HEK293 (cell line): ENCODE measurements at regions of chr10 and their contacts with region 1.

Region 1: DNA sequence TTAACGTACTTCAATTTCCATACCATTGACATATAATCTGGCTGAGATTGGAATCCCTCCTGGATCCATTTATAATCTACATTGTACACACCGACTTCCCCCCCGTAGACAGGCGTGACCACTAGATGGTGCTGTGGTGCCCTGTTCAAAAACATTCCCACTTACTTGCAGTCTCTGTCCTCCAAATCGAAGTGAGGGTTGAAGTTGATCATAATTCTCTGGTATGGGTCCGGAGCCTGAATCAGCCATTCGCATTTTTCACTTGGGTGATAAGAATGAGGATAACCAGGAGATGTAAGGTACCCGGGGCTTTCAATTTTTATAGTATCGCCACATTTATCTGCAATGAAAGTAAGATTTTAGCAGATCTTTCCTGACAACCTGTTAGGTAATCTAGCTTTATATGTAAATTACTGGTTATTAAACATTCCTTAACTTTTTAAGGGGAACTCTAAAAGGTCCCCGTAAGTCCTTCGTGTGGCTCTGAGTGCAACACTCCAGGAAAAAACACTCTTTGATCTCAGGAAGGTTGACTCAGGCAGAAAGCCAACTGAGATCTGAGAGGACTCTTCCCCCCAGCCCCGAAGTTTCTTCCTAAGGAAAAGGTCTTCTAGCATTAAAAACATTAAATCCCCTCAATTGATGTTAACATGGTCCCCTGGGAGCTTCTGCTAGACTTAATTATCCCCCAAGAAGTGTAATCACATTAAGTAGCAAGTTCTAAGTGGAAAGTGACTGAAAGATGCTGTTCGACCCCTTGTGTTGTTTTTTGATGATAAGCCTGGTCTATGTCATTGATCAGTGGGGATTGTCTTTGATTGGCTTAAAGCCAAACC is 3.7 kb downstream of the NRP1 start:
- H3K4me3 ChIP-seq: no peak overlapping the region
- H3K27ac ChIP-seq: peak overlapping the region; percentile 90
- H3K4me1 ChIP-seq: peaks cover 19% of the 10 kb centered on the region
- CTCF ChIP-seq: peak; percentile 61; the same call in 1 of the 2 replicates

Region 2: DNA sequence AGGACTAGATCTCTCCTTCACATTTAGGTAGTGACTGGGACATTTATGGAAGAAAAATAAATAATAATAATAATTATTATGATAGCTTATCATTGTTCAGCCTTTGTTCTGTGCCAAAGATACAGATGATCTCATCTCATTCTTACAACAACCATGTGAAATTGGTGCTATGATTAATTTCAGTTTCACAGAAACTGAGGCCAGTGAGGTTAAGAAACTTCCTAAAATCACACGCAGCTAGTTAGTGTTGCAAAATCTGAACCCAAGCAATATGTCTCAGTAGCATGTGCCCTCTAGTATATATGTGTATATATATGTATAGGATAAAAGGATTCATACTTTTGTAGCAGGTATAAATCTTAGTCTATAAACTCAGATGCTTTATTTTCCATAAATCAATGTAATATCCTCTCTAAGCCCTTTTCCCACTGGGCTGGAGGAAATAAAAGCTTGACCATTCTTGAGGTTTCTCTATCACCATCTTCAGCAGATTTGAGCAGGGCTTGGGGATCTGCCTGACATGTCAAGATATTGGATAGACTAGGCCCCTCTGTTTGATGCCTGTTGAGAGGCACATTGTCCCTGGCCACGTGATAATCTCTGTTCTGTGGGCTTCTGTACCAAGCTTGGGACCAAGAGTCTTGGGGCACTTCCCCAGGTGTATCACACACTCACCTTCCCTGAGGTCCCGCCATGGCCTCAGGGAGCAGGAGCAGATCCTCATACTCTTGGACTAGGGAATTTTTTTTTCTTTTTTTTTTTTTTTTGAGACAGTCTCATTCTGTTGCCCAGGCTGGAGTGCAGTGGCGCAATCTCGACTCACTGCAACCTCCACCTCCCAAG is 176.3 kb after region 1 on chr10:
- CTCF ChIA-PET with region 1: no interaction called
- POLR2A ChIA-PET with region 1: interaction called, 11 read pairs
- H3K4me3 ChIP-seq: no peak overlapping the region
- H3K27ac ChIP-seq: no peak overlapping the region
- H3K4me1 ChIP-seq: peaks cover 15% of the 10 kb centered on the region; the same call in 1 of the 2 replicates
- CTCF ChIP-seq: no peak

Region 3: DNA sequence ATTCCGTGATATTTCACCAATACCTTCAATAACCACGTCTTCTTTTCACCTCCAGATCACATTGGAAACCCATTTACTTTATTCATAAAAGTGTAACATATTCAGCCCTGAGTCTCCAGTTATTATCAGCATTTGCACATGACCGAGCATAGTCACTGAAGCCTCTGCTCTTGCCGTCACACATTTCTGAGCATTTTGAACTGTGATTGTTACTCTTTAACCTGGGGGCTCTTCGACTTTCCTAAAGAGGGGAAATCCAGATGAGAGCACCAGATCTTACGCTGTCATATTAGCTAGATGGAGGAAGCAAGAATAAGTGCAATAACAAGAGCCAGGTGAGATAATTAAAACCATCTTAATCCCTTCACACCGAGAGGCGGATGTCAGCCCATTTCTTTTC is 263.7 kb after region 1 on chr10:
- CTCF ChIA-PET with region 1: no interaction called
- POLR2A ChIA-PET with region 1: interaction called, 10 read pairs
- H3K4me3 ChIP-seq: no peak overlapping the region
- H3K27ac ChIP-seq: no peak overlapping the region
- H3K4me1 ChIP-seq: no peaks in the 10 kb centered on the region
- CTCF ChIP-seq: no peak